Caco-2 (cell line): ENCODE measurements at regions of chrX and their contacts with region 1.

Region 1: DNA sequence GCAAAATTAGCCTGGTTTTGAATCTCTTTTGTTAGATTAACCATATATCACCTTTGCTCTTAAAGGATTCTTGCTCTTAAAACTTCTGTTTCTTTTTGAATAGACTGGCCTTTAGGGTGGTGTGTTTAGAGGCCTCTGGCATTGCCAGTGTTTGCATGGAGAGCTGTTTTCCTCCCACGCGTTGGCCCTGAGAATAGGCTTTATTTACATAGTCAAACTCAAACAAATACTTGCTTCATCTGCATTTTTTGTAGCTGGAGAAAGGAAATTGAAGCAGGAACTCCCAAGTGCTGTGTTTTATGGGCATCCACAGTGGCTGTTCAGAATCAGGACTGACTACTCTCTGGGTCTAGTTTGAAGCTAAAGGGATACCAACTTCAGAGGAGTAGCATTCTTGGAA is 2.7 kb downstream of the SHROOM2 start:
- DNase-seq: peak; percentile 53 to 62
- H3K4me3 ChIP-seq: no peak overlapping the region
- H3K4me3 Mint-ChIP-seq: peak overlapping the region; percentile 81
- H3K27ac Mint-ChIP-seq: no peak overlapping the region
- H3K4me1 ChIP-seq: peaks cover 14% of the 10 kb centered on the region
- H3K4me1 Mint-ChIP-seq: peaks cover 9% of the 10 kb centered on the region
- H3K27me3 ChIP-seq: no peaks in the 10 kb centered on the region
- H3K27me3 Mint-ChIP-seq: no peaks in the 10 kb centered on the region
- CTCF ChIP-seq: no peak

Region 2: DNA sequence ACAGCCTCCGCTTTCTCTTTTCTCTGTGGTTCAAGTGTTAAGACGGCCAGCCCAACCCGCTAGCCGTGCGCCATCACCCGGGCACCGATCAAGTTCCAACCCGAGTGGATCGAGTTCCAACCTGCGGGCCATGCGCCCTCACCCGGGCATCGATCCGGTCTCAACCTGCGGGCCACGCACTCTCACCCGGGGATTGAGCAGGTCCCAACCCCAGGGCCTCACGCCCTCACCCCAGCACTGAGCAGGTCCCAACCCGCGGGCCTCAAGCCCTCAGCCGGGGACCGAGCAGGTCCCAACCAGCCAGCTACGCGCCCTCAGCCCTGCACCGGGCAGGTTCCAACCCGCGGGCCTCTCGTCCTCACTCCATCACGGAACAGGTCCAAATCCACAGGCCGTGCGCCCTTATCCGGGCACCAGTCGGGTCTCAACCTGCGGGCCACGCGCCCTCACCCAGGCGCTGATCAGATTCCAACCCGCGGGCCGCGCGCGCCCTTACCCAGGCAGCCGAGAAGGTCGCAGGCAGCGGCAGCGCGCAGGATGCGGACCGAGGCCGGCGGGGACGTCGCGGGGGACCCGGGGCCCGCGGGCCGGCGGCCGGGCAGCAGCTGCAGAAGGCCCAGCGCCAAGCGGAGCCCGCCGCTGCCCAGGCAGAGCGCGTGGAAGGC is 23.7 kb before region 1 on chrX:
- CTCF ChIA-PET with region 1: no interaction called
- POLR2A ChIA-PET with region 1: no interaction called
- intact Hi-C with region 1: no loop called
- DNase-seq: no peak
- H3K4me3 ChIP-seq: no peak overlapping the region
- H3K4me3 Mint-ChIP-seq: no peak overlapping the region
- H3K27ac Mint-ChIP-seq: no peak overlapping the region
- H3K4me1 ChIP-seq: no peaks in the 10 kb centered on the region
- H3K4me1 Mint-ChIP-seq: no peaks in the 10 kb centered on the region
- H3K27me3 ChIP-seq: no peaks in the 10 kb centered on the region
- H3K27me3 Mint-ChIP-seq: no peaks in the 10 kb centered on the region
- CTCF ChIP-seq: no peak

Region 3: DNA sequence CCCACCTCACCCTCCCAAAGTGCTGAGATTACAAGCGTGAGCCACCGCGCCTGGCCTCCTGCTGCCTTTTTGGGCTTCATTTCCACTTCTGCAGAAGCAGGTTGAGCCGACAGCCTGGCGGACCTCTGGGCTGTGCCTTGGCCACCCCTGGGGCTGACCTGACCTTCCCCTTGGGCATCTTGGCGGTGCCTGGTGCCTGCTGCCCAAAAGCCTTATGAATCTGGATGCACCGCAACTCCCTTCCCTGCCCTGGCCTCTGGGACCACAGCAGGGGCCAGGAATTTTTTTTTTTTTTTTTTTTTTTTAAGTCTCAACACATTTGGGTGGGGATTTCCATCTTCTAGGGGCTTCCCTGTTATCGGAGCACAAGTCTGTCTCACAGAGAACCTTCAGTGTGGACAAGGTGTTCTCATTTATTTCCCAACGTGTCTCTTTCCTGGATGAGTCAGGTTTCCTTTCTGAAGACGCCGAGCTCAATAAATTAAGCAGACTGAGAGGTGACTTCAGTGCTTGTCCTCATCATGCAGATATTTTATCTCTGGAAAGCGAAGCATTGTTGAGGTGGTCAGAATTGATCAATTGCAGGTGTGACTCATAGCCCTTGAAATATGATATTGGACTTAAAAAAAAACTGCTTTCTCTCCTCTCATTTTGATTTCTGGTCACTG is 77.0 kb after region 1 on chrX:
- CTCF ChIA-PET with region 1: no interaction called
- POLR2A ChIA-PET with region 1: no interaction called
- intact Hi-C with region 1: loop called (anchors 1 kb)
- DNase-seq: no peak
- H3K4me3 ChIP-seq: no peak overlapping the region
- H3K4me3 Mint-ChIP-seq: no peak overlapping the region
- H3K27ac Mint-ChIP-seq: peak overlapping the region; percentile 91
- H3K4me1 ChIP-seq: peaks cover 37% of the 10 kb centered on the region
- H3K4me1 Mint-ChIP-seq: peaks cover 24% of the 10 kb centered on the region
- H3K27me3 ChIP-seq: no peaks in the 10 kb centered on the region
- H3K27me3 Mint-ChIP-seq: no peaks in the 10 kb centered on the region
- CTCF ChIP-seq: no peak